IMR-90 (cell line): ENCODE measurements at regions of chr6 and their contacts with region 1.

Region 1: DNA sequence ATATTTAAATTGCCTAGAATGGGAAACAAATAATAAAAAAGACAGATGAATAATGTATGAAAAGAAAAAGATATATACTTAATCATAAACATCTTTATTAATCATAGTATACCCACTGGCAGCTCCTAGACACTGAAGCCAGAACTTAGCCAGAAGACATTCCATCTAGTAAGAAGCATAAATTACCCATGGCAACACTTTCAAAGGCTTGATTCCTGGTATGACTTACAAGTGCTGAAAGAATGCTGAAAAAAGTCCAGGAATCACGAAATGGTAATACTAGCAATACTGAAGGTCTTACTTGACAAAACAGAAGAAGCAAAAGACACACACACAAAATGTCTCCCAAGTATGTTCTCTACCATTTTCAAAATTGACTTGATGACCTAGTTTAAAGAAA is 38.0 kb downstream of the RWDD2A start:
- DNase-seq: peak; percentile 90
- ATAC-seq: peak; percentile 89
- H3K4me3 ChIP-seq: no peak overlapping the region
- H3K27ac ChIP-seq: no peak overlapping the region
- H3K4me1 ChIP-seq: peaks cover 4% of the 10 kb centered on the region; the same call in 1 of the 2 replicates
- H3K27me3 ChIP-seq: no peaks in the 10 kb centered on the region
- CTCF ChIP-seq: no peak
- POLR2A ChIP-seq: no peak
- RAD21 ChIP-seq: no peak

Region 2: DNA sequence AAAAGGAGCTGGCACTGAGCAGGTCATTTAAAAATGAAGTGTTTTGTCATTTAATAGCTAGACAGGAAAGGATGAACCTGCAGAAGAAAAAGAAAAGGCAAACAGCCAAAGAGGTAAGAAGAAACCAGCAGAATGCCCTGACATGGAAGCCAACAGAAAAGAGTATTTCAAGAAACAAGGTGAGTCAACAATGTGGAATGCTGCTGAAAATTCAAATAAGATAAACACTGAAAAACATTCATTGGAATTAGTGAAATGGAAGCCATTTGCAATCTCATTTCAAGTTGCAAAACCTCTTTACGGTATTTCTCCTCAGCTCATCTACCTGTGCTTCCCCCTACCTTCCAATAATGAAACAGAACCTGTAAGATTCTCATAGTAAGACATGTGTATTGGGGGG is 21.6 kb after region 1 on chr6:
- CTCF ChIA-PET with region 1: no interaction called
- POLR2A ChIA-PET with region 1: no interaction called
- dilution Hi-C with region 1: no loop called
- in situ Hi-C with region 1: no loop called
- intact Hi-C with region 1: no loop called
- DNase-seq: peak; percentile 85
- ATAC-seq: peak; percentile 75
- H3K4me3 ChIP-seq: no peak overlapping the region
- H3K27ac ChIP-seq: no peak overlapping the region
- H3K4me1 ChIP-seq: peaks cover 3% of the 10 kb centered on the region; the same call in 1 of the 2 replicates
- H3K27me3 ChIP-seq: no peaks in the 10 kb centered on the region
- CTCF ChIP-seq: no peak
- POLR2A ChIP-seq: no peak
- RAD21 ChIP-seq: no peak

Region 3: GRCh38 chr6:83270971-83271719 is 40.0 kb after region 1 on chr6:
- CTCF ChIA-PET with region 1: interaction called, 4 read pairs
- POLR2A ChIA-PET with region 1: no interaction called
- dilution Hi-C with region 1: no loop called
- in situ Hi-C with region 1: no loop called
- intact Hi-C with region 1: loop called (anchors 5 kb)
- DNase-seq: peak; percentile 97
- ATAC-seq: peak; percentile 80
- H3K4me3 ChIP-seq: no peak overlapping the region
- H3K27ac ChIP-seq: no peak overlapping the region
- H3K4me1 ChIP-seq: peaks cover 7% of the 10 kb centered on the region
- H3K27me3 ChIP-seq: no peaks in the 10 kb centered on the region
- CTCF ChIP-seq: no peak
- POLR2A ChIP-seq: no peak
- RAD21 ChIP-seq: no peak